Activated T-helper 1 cell treated with anti-CD3 and anti-CD28 coated beads, Interleukin-12 subunit alpha, Interleukin-12 subunit beta, Interleukin-2, Interleukin-4 antibody, amounts not matched to agents 30 ng/mL and 10 ng/mL and 1 ng/mL, durations not matched to agents 14 hours and 24 hours and 36 hours (primary cell): ENCODE measurements at regions of chr4 and their contacts with region 1.

Region 1: DNA sequence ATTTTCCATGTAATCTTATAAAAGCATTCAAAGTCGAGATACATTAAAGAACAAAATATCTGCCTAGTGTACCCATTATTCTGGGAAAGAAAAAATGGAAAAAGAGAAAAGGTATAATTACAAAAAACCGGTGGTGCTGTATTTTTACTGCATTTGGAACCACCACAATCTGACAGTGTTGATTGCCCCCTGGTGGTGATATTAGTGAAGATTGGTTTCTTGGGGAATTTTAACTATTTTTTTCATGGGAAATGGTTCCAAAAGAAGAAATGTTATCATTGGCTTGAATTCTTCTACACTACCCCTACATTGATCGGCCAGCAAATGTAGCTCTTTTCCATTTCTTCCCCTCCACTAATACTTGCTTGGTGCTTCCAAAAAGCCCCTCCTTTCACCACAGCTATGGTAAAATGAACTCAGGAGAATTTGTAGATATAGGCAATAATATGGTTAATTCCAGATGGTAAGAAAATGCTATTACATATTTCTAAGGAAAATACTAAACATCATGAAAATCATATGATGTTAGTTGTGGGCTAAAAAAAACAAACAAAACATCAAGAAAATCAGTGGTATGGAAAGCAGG is 50.0 kb downstream of the COX18 start:
- DNase-seq: no peak
- H3K4me3 Mint-ChIP-seq: no peak overlapping the region
- H3K27ac Mint-ChIP-seq: no peak overlapping the region
- H3K4me1 Mint-ChIP-seq: no peaks in the 10 kb centered on the region
- H3K27me3 Mint-ChIP-seq: peaks cover 8% of the 10 kb centered on the region

Region 2: DNA sequence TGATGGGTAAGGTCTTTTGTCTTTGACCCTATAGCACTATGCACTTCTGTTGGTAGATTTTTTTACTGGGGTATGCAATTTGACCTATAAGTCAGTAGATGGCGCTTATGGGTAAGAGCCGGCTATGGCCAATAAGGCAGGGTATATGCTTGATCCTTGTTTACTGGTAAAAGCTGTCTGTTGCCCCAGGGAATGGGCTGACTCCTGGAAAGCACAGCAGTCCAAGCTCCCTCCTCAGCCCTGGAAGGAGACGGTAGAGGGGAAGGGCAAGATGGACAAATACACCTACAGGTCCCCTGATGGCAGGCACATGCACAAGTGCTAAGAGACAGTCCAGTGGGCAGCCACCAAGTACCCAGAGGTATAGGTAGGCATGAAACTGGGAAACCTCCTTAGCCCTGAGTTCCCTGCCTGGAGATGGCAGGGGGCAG is 514.2 kb before region 1 on chr4:
- intact Hi-C with region 1: loop called (anchors 1 kb)
- DNase-seq: no peak
- H3K4me3 Mint-ChIP-seq: no peak overlapping the region
- H3K27ac Mint-ChIP-seq: no peak overlapping the region
- H3K4me1 Mint-ChIP-seq: no peaks in the 10 kb centered on the region
- H3K27me3 Mint-ChIP-seq: peaks cover 2% of the 10 kb centered on the region

Region 3: DNA sequence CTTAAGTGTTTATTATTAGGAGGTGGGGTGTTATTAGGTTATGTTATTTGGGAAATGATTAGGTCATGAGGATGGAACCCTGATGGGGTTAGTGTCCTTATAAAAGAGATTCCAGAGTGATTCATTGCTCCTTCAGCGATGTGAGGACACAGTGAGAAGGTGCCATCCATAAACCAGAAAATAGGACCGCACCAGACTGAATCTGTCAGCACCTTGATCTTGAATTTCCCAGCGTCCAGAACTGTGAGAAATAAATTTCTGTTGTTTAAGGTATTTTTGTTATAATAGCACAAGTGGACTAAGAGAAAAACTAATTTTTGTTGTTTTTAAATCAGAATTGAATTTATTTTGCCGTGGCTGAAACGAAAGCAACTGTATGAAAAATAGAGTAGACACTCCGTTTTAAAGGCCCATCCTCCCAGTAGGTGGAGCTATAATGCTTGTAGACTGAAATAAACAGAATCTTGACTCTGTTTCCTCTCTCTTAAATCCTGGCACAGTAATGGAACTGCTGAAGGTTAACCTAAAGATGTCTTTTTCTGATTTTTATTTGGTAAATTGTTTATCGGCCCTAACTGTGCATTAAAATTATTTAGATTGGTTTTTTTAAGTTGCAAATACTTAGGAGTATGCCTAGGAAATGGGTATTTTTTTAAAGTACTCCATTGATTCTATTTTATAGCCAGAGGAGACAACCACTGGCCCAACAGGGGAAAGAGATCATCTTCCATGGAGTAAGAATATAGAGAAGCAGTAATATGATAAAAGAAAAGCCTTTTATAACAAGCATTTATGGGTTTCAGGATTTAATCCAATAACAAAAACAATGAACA is 317.4 kb before region 1 on chr4:
- intact Hi-C with region 1: loop called (anchors 1 kb)
- DNase-seq: no peak
- H3K4me3 Mint-ChIP-seq: peak overlapping the region; percentile 74
- H3K27ac Mint-ChIP-seq: no peak overlapping the region
- H3K4me1 Mint-ChIP-seq: peaks cover 8% of the 10 kb centered on the region
- H3K27me3 Mint-ChIP-seq: peaks cover 9% of the 10 kb centered on the region